HepG2 (cell line): ENCODE measurements at regions of chr3 and their contacts with region 1.

Region 1: DNA sequence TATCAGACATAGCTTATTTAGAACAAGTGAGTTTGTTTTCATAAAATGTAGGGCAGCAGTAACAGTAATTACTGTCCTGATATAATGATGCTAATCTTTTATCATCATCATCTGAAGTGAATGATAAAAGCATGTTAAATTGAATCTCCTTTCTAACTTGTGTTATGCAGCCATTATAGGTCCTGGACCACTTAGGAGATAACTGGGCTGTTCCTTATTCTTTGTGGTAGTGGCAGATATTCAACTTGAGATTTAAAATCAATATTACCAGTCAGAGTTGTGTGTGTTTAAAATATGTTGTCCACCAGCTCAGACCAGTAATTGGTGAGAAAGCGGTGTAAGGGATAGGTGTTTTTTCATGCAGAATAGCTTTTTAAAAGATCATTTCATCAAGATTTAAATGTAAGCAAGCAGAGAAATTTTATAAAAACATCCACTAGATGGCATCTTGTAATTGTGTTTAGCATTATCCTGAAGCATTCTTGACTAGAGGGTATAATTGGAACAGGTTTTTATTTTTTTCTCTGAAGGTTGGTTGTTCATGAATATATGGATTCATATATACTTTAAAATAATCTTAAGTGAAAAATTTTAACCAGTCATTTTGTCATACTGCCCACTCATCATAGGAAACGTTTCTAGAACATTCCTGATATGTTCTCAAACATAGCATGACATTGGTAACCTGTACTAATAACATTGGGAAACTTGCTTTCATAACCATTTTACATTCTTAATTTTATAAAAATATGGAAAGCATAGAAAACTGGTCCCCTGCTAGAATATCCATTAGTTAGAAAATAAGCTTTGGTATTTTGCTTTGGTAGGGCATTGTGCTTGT is 153.9 kb downstream of the BBX start:
- DNase-seq: peak; percentile 31
- ATAC-seq: peak; percentile 60
- H3K4me3 ChIP-seq: no peak overlapping the region
- H3K27ac ChIP-seq: no peak overlapping the region
- H3K4me1 ChIP-seq: peaks cover 31% of the 10 kb centered on the region
- H3K27me3 ChIP-seq: no peaks in the 10 kb centered on the region
- CTCF ChIP-seq: peak; percentile 54
- EP300 ChIP-seq: no peak
- POLR2A ChIP-seq: no peak
- RAD21 ChIP-seq: peak; percentile 26; the same call in 1 of the 2 replicates

Region 2: DNA sequence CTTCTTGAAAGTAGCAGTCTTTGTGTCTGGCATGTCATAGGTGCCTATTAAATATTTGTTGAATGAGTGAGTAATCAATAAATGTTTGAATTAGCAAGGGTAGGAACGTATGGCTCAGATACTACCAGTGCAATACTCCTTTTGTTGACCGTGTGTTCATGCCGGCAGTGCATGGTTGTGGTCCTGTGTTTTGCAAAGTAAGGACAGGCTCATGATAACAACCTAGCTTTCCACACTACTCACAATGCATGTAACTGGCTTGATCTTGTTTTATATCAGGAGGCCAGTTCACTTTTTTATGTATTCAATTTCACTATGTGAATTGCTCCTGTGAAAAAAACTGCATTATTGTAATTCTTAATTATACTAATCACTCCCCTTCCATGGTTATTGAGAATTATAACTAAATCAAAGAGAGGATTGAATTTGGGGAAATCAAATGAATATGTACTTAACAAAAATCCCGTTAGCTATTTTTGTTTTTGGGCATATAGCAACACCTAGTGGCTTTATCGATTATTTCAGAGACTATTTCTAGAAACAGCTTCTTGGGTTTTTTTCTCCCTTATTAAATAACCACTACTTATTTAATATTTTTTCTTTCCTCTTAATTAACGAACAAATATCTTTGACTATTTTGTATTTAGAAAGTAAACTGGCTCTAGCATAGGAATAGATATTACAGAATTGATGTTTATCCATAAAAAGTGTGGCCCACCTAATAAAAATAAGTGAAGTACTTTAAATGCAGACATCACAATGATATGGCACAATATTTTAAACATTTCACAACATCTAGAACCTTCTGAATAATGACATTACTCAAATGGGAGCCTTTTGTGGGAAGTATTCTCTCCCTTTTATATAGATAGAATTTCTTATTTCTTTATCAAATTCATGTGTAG is 64.6 kb after region 1 on chr3:
- CTCF ChIA-PET with region 1: interaction called, 34 read pairs
- POLR2A ChIA-PET with region 1: no interaction called
- in situ Hi-C with region 1: loop called (anchors 5 kb)
- intact Hi-C with region 1: loop called (anchors 1 kb)
- DNase-seq: peak; percentile 8
- ATAC-seq: no peak
- H3K4me3 ChIP-seq: no peak overlapping the region
- H3K27ac ChIP-seq: no peak overlapping the region
- H3K4me1 ChIP-seq: peaks cover 11% of the 10 kb centered on the region; the same call in 1 of the 2 replicates
- H3K27me3 ChIP-seq: no peaks in the 10 kb centered on the region; a peak in 1 of 5 replicates
- CTCF ChIP-seq: peak; percentile 36; the same call in 1 of the 2 replicates
- EP300 ChIP-seq: no peak
- POLR2A ChIP-seq: no peak
- RAD21 ChIP-seq: 0 out of 2 replicates have a peak, but pooled peaks have one; percentile 34

Region 3: GRCh38 chr3:107753480-107753879 is 76.8 kb after region 1 on chr3:
- CTCF ChIA-PET with region 1: interaction called, 12 read pairs
- POLR2A ChIA-PET with region 1: no interaction called
- in situ Hi-C with region 1: no loop called
- intact Hi-C with region 1: loop called (anchors 1 kb)
- DNase-seq: peak; percentile 47
- ATAC-seq: peak; percentile 98
- H3K4me3 ChIP-seq: no peak overlapping the region
- H3K27ac ChIP-seq: no peak overlapping the region
- H3K4me1 ChIP-seq: no peaks in the 10 kb centered on the region
- H3K27me3 ChIP-seq: no peaks in the 10 kb centered on the region
- CTCF ChIP-seq: peak; percentile 76
- EP300 ChIP-seq: no peak
- POLR2A ChIP-seq: no peak
- RAD21 ChIP-seq: 0 out of 2 replicates have a peak, but pooled peaks have one; percentile 39

Region 4: GRCh38 chr3:107846279-107846852 is 169.7 kb after region 1 on chr3:
- CTCF ChIA-PET with region 1: no interaction called
- POLR2A ChIA-PET with region 1: no interaction called
- in situ Hi-C with region 1: no loop called
- intact Hi-C with region 1: loop called (anchors 1 kb)
- DNase-seq: peak; percentile 47
- ATAC-seq: peak; percentile 97
- H3K4me3 ChIP-seq: peak overlapping the region in 1 of 3 experiments; percentile 0; a peak in 1 of 6 replicates
- H3K27ac ChIP-seq: no peak overlapping the region
- H3K4me1 ChIP-seq: peaks cover 35% of the 10 kb centered on the region
- H3K27me3 ChIP-seq: peaks cover 0 to 15% of the 10 kb centered on the region in 2 experiments; a peak in 2 of 5 replicates
- CTCF ChIP-seq: peak; percentile 89
- EP300 ChIP-seq: no peak
- POLR2A ChIP-seq: no peak
- RAD21 ChIP-seq: peak; percentile 74